Heart right ventricle (tissue), 16 donors: ENCODE measurements at regions of chr17 and their contacts with region 1.

Region 1: GRCh38 chr17:37489197-37490001 is at the start of gene DUSP14:
- DNase-seq: peak; percentile 73 to 86
- ATAC-seq: peak; percentile 80 to 95 (median 87)
- H3K4me3 ChIP-seq: peak within 1 kb of the TSS; percentile 71 to 99 (median 86)
- H3K27ac ChIP-seq: peak within 1 kb of the TSS; percentile 69 to 94 (median 90)
- H3K4me1 ChIP-seq: peaks cover 0 to 44% (median 40%) of the 10 kb centered on the region in 9 donors
- H3K27me3 ChIP-seq: peaks cover 0 to 24% (median 0%) of the 10 kb centered on the region in 7 donors
- CTCF ChIP-seq: no peak
- total RNA-seq, gene DUSP14: 12.6 to 21.7 (median 18.5) TPM

Region 2: GRCh38 chr17:37239690-37240334 is 249.6 kb before region 1 on chr17:
- intact Hi-C with region 1: no loop called
- DNase-seq: no peak
- ATAC-seq: peak in 3 of 8 donors; percentile 11 to 71 (median 47)
- H3K4me3 ChIP-seq: no peak overlapping the region
- H3K27ac ChIP-seq: no peak overlapping the region
- H3K4me1 ChIP-seq: peaks cover 0 to 7% (median 0%) of the 10 kb centered on the region in 9 donors
- H3K27me3 ChIP-seq: no peaks in the 10 kb centered on the region
- CTCF ChIP-seq: peak in 8 of 9 donors; percentile 27 to 71 (median 64)

Region 3: DNA sequence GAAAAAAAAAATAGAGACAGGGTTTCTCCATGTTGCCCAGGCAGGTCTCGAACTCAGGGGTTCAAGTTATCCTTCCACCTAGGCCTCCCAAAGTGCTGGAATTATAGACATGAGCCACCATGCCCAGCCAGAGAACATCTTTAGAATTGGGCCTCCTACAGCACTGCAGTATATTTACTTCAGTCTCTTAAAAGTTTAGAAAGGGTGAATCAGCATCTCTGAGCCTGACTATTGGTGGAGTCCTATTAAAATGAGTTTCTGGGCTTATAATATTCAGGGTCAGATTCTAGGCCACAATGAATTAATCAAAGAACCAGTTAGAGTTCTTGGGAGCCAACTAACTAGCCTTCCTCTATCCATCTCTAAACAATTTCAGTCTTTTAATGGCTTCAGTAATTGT is 59.9 kb before region 1 on chr17:
- intact Hi-C with region 1: loop called in 1 of 10 experiments (anchors 10 kb)
- DNase-seq: no peak
- ATAC-seq: no peak
- H3K4me3 ChIP-seq: no peak overlapping the region
- H3K27ac ChIP-seq: no peak overlapping the region
- H3K4me1 ChIP-seq: peaks cover 0 to 4% (median 0%) of the 10 kb centered on the region in 9 donors
- H3K27me3 ChIP-seq: no peaks in the 10 kb centered on the region
- CTCF ChIP-seq: no peak

Region 4: DNA sequence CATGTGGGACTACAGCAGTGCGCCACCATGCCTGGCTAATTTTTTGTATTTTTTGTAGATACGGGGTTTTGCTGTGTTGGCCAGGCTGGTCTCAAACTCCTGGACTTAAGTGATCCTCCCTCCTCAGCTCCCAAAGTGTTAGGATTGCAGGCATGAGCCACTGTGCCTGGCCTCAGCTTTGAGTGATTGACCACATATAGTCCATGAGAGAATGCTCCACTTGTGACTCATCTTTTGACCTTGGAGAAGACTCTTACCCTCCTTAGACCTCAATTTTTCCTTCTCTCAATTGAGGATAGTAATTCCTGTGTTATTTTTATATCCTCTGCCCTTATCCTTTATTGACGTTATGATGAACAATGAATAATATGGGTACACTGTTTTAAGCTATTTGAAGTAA is 30.6 kb before region 1 on chr17:
- intact Hi-C with region 1: no loop called
- DNase-seq: no peak
- ATAC-seq: no peak
- H3K4me3 ChIP-seq: no peak overlapping the region
- H3K27ac ChIP-seq: no peak overlapping the region
- H3K4me1 ChIP-seq: no peaks in the 10 kb centered on the region
- H3K27me3 ChIP-seq: no peaks in the 10 kb centered on the region
- CTCF ChIP-seq: no peak